H1 (cell line): ENCODE measurements at regions of chr1 and their contacts with region 1.

Region 1: GRCh38 chr1:171644805-171645483 is 7.5 kb downstream of the MYOC start:
- DNase-seq: peak; percentile 82 to 89
- H3K4me3 ChIP-seq: peak overlapping the region in 1 of 4 experiments; percentile 14; a peak in 1 of 8 replicates
- H3K27ac ChIP-seq: no peak overlapping the region
- H3K4me1 ChIP-seq: peaks cover 2 to 15% (median 7%) of the 10 kb centered on the region in 4 experiments
- H3K27me3 ChIP-seq: no peaks in the 10 kb centered on the region
- CTCF ChIP-seq: peak; percentile 69 to 99 (median 89)
- EP300 ChIP-seq: no peak
- POLR2A ChIP-seq: no peak
- RAD21 ChIP-seq: peak; percentile 89 to 91

Region 2: GRCh38 chr1:171623651-171624331 is 21.2 kb before region 1 on chr1:
- CTCF ChIA-PET with region 1: interaction called, 42 read pairs
- POLR2A ChIA-PET with region 1: no interaction called
- DNase-seq: no peak
- H3K4me3 ChIP-seq: no peak overlapping the region
- H3K27ac ChIP-seq: no peak overlapping the region
- H3K4me1 ChIP-seq: peaks cover 0 to 5% (median 2%) of the 10 kb centered on the region in 4 experiments; a peak in 1 of 7 replicates
- H3K27me3 ChIP-seq: no peaks in the 10 kb centered on the region
- CTCF ChIP-seq: no peak
- EP300 ChIP-seq: no peak
- POLR2A ChIP-seq: no peak
- RAD21 ChIP-seq: no peak

Region 3: GRCh38 chr1:171663854-171664575 is 19.1 kb after region 1 on chr1:
- CTCF ChIA-PET with region 1: interaction called, 143 read pairs
- POLR2A ChIA-PET with region 1: no interaction called
- DNase-seq: no peak
- H3K4me3 ChIP-seq: no peak overlapping the region
- H3K27ac ChIP-seq: no peak overlapping the region
- H3K4me1 ChIP-seq: no peaks in the 10 kb centered on the region
- H3K27me3 ChIP-seq: no peaks in the 10 kb centered on the region
- CTCF ChIP-seq: no peak
- EP300 ChIP-seq: no peak
- POLR2A ChIP-seq: no peak
- RAD21 ChIP-seq: no peak

Region 4: GRCh38 chr1:171741872-171742576 is 97.1 kb after region 1 on chr1 and contains the start of gene VAMP4:
- CTCF ChIA-PET with region 1: interaction called, 18 read pairs
- POLR2A ChIA-PET with region 1: interaction called, 4 read pairs
- DNase-seq: peak; percentile 75 to 89
- H3K4me3 ChIP-seq: peak within 1 kb of the TSS; percentile 96 to 100 (median 98)
- H3K27ac ChIP-seq: peak within 1 kb of the TSS; percentile 55; the same call in 1 of the 2 replicates
- H3K4me1 ChIP-seq: peaks cover 0 to 6% (median 1%) of the 10 kb centered on the region in 4 experiments; a peak in 3 of 7 replicates
- H3K27me3 ChIP-seq: no peaks in the 10 kb centered on the region
- CTCF ChIP-seq: no peak
- EP300 ChIP-seq: peak in 1 of 2 experiments; percentile 88; a peak in 1 of 3 replicates
- POLR2A ChIP-seq: peak; percentile 53 to 70
- RAD21 ChIP-seq: peak in 1 of 2 experiments; percentile 24; a peak in 1 of 4 replicates
- total RNA-seq, gene VAMP4: 12.4 and 13.9 TPM in 2 replicates

Region 5: GRCh38 chr1:171781176-171781875 is 136.4 kb after region 1 on chr1 and contains the start of gene METTL13:
- CTCF ChIA-PET with region 1: interaction called, 25 read pairs
- POLR2A ChIA-PET with region 1: no interaction called
- DNase-seq: peak; percentile 94 to 98
- H3K4me3 ChIP-seq: peak within 1 kb of the TSS; percentile 93 to 98 (median 95)
- H3K27ac ChIP-seq: peak within 1 kb of the TSS; percentile 68; the same call in 1 of the 2 replicates
- H3K4me1 ChIP-seq: peaks cover 0 to 4% (median 2%) of the 10 kb centered on the region in 4 experiments; a peak in 4 of 7 replicates
- H3K27me3 ChIP-seq: no peaks in the 10 kb centered on the region
- CTCF ChIP-seq: no peak
- EP300 ChIP-seq: peak in 1 of 2 experiments; percentile 20; a peak in 1 of 3 replicates
- POLR2A ChIP-seq: peak; percentile 73 to 88
- RAD21 ChIP-seq: no peak
- total RNA-seq, gene METTL13: 63.1 and 66.3 TPM in 2 replicates